IMR-90 (cell line): ENCODE measurements at regions of chr6 and their contacts with region 1.

Region 1: DNA sequence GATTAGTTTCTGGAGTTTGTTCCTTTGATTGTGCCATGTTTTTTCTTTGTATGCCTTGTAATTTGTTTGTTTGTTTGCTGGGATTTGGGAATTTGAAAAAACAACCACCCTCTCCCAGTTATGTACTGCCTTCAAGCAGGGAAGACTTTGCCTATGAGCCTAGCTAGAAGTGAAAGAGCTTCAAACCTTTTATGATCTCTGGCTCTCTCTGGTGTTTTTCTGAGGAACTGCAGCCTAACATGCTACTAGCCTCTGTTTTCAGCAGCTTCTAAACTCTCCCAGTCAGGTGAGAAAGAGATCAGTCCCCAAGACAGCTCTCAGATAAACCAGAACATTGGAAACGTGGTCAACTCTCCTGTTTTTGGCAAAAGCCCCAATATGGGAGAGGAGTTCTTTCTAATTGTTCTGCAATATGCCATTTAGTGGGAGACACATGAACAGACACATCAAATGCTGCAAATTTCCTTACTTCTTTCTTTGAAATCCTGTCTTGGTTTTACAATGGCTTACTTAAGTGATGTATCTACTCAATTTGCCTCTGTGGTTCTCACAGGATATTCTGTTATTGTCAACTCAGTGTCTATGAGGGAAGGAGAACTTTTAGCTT is 58.9 kb upstream of the SERINC1 start:
- DNase-seq: peak; percentile 63
- ATAC-seq: peak; percentile 99
- H3K4me3 ChIP-seq: no peak overlapping the region
- H3K27ac ChIP-seq: no peak overlapping the region
- H3K4me1 ChIP-seq: no peaks in the 10 kb centered on the region
- H3K27me3 ChIP-seq: no peaks in the 10 kb centered on the region
- CTCF ChIP-seq: peak; percentile 82
- POLR2A ChIP-seq: no peak
- RAD21 ChIP-seq: peak; percentile 78

Region 2: GRCh38 chr6:122198922-122199321 is 331.6 kb before region 1 on chr6:
- CTCF ChIA-PET with region 1: no interaction called
- POLR2A ChIA-PET with region 1: no interaction called
- dilution Hi-C with region 1: no loop called
- in situ Hi-C with region 1: no loop called
- intact Hi-C with region 1: loop called (anchors 5 kb)
- DNase-seq: no peak
- ATAC-seq: no peak
- H3K4me3 ChIP-seq: no peak overlapping the region
- H3K27ac ChIP-seq: no peak overlapping the region
- H3K4me1 ChIP-seq: no peaks in the 10 kb centered on the region
- H3K27me3 ChIP-seq: no peaks in the 10 kb centered on the region
- CTCF ChIP-seq: no peak
- POLR2A ChIP-seq: no peak
- RAD21 ChIP-seq: no peak

Region 3: GRCh38 chr6:122381497-122382265 is 148.9 kb before region 1 on chr6:
- CTCF ChIA-PET with region 1: interaction called, 26 read pairs
- POLR2A ChIA-PET with region 1: no interaction called
- dilution Hi-C with region 1: no loop called
- in situ Hi-C with region 1: loop called (anchors 10 kb)
- intact Hi-C with region 1: loop called (anchors 1 kb)
- DNase-seq: peak; percentile 79
- ATAC-seq: peak; percentile 96
- H3K4me3 ChIP-seq: no peak overlapping the region
- H3K27ac ChIP-seq: no peak overlapping the region
- H3K4me1 ChIP-seq: no peaks in the 10 kb centered on the region
- H3K27me3 ChIP-seq: no peaks in the 10 kb centered on the region
- CTCF ChIP-seq: peak; percentile 75
- POLR2A ChIP-seq: no peak
- RAD21 ChIP-seq: peak; percentile 74

Region 4: DNA sequence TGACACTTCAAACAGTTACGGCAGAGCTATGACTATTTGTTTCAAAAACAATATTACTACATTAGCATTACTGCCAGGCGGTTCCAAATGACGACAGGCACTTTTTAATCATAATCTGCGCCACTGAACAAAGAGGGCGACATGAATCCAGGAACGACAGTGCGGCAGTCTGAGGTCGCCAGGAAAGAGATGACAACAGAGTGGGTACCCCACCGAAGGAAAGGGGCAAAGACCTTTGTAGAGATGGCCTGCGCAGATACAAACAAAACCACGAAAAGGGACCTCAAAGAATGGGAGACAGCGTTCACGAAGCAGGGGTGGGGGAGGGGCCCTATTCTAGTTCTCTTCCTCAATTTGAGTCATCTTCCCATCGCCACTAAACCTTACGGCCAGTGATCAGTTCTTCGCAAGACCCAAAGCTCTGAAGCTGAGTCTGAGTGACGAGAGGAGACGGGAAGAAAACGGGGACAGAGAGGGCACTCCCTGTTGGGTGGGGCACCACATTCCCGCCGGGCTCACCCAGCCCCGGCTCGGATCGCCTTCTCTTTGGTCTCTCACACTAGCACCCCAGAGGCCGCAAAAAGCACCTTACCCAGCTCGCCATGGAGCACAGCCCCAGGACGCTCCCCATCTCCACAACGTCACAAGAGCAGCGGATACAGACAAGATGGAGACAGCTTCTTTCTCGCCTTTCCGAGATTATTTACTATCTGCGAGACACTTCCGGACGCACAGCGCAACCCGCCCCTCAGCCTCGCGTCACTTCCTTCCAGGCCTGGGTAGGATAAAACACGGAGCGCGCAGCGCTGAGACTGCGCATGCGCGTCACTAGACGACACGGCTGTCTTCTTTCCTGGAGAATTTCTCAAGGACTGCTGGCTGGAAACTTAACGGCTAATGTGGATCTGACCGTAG is 59.2 kb before region 1 on chr6 and contains the start of gene SERINC1:
- CTCF ChIA-PET with region 1: interaction called, 7 read pairs
- POLR2A ChIA-PET with region 1: no interaction called
- dilution Hi-C with region 1: no loop called
- in situ Hi-C with region 1: no loop called
- intact Hi-C with region 1: loop called (anchors 1 kb)
- DNase-seq: peak; percentile 95
- ATAC-seq: peak; percentile 91
- H3K4me3 ChIP-seq: peak within 1 kb of the TSS; percentile 81
- H3K27ac ChIP-seq: peak within 1 kb of the TSS; percentile 90
- H3K4me1 ChIP-seq: no peaks in the 10 kb centered on the region
- H3K27me3 ChIP-seq: no peaks in the 10 kb centered on the region
- CTCF ChIP-seq: no peak
- POLR2A ChIP-seq: peak; percentile 84
- RAD21 ChIP-seq: no peak
- total RNA-seq, gene SERINC1: 123 and 235 TPM in 2 replicates

Region 5: DNA sequence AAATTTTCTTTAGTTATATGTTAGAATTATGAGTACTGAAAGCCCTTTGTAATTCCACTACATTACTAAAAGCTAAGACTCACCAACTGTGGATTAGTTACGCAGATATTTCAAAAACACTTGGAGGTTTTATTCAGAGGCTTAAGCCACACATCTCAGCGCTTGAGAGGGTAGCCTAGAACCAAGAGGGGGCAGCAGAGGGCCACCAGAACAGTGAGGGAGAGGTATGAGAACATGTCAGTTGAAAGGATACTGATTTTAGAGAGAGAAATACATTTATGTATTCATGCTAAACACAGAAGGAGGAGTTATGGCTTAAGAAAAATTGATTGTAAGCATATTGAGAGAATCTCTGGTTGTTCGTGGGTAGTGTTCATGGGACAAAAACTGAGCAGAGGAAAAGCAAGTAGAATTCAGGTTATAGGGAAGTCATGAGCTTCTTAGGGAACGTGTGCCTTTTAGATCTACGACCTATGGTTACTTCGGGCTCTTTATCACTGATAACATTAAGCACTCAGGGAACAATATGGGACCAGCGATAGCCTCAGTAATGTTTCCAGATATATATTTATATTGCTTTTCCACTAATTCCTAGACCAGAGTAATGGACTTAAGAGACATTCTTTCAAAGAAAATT is 38.5 kb before region 1 on chr6:
- CTCF ChIA-PET with region 1: interaction called, 55 read pairs
- POLR2A ChIA-PET with region 1: no interaction called
- dilution Hi-C with region 1: no loop called
- in situ Hi-C with region 1: no loop called
- intact Hi-C with region 1: loop called (anchors 1 kb)
- DNase-seq: peak; percentile 67
- ATAC-seq: peak; percentile 99
- H3K4me3 ChIP-seq: no peak overlapping the region
- H3K27ac ChIP-seq: no peak overlapping the region
- H3K4me1 ChIP-seq: no peaks in the 10 kb centered on the region; the same call in 1 of the 2 replicates
- H3K27me3 ChIP-seq: no peaks in the 10 kb centered on the region
- CTCF ChIP-seq: peak; percentile 85
- POLR2A ChIP-seq: no peak
- RAD21 ChIP-seq: peak; percentile 79

Region 6: GRCh38 chr6:122511193-122511924 is 19.2 kb before region 1 on chr6:
- CTCF ChIA-PET with region 1: interaction called, 19 read pairs
- POLR2A ChIA-PET with region 1: no interaction called
- dilution Hi-C with region 1: no loop called
- in situ Hi-C with region 1: no loop called
- intact Hi-C with region 1: no loop called
- DNase-seq: no peak
- ATAC-seq: no peak
- H3K4me3 ChIP-seq: no peak overlapping the region
- H3K27ac ChIP-seq: no peak overlapping the region
- H3K4me1 ChIP-seq: no peaks in the 10 kb centered on the region
- H3K27me3 ChIP-seq: no peaks in the 10 kb centered on the region
- CTCF ChIP-seq: no peak
- POLR2A ChIP-seq: no peak
- RAD21 ChIP-seq: no peak

Region 7: GRCh38 chr6:123503619-123504018 is 973.1 kb after region 1 on chr6:
- CTCF ChIA-PET with region 1: no interaction called
- POLR2A ChIA-PET with region 1: no interaction called
- dilution Hi-C with region 1: no loop called
- in situ Hi-C with region 1: no loop called
- intact Hi-C with region 1: no loop called
- DNase-seq: no peak
- ATAC-seq: no peak
- H3K4me3 ChIP-seq: no peak overlapping the region
- H3K27ac ChIP-seq: no peak overlapping the region
- H3K4me1 ChIP-seq: no peaks in the 10 kb centered on the region
- H3K27me3 ChIP-seq: no peaks in the 10 kb centered on the region
- CTCF ChIP-seq: no peak
- POLR2A ChIP-seq: no peak
- RAD21 ChIP-seq: no peak